ENCODE measurements at regions of chr6 and their contacts with region 1.

Region 1: DNA sequence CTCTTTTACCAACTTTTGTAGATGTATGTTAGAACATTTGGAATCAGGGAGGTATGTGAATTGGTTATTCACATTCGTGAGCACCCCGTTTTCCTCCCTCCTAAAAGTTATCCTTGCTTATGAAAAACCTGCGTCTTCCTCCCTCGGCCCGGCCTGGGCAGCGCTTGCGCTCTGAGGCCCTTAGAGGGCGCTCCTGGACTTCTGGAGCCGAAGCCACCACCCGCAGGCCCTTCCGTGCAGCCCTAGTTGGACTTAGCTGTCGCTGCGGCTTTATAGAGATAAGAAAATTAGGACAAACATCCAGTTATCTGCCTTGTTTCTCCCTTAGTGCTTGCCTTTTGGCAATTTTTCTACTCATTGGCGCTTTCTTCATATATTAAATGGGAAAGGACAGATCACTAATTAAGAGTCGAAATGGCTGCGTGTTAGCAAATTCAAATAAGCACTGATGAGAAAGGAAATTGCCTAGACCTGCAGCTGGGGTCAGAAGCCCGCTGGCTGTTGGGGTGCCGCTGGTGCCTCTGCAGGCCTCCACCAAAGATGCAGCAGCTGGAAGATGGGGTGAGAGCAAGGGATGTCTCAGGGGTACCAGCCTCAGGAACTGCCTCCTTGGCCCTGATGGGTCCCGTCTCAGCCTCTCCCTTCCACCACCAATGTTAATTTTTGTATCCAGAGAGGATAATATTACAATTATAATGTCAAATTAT is 5.2 kb downstream of the FNDC1 start:
- DNase-seq: peak; percentile 74
- H3K4me3 Mint-ChIP-seq: no peak overlapping the region
- H3K27ac Mint-ChIP-seq: no peak overlapping the region
- H3K4me1 Mint-ChIP-seq: peaks cover 14% of the 10 kb centered on the region
- H3K27me3 Mint-ChIP-seq: peaks cover 67% of the 10 kb centered on the region

Region 2: GRCh38 chr6:159184559-159184958 is 10.1 kb after region 1 on chr6:
- CTCF ChIA-PET with region 1: interaction called, 27 read pairs
- POLR2A ChIA-PET with region 1: no interaction called
- DNase-seq: no peak
- H3K4me3 Mint-ChIP-seq: no peak overlapping the region
- H3K27ac Mint-ChIP-seq: no peak overlapping the region
- H3K4me1 Mint-ChIP-seq: peaks cover 18% of the 10 kb centered on the region
- H3K27me3 Mint-ChIP-seq: peaks cover 15% of the 10 kb centered on the region

Region 3: DNA sequence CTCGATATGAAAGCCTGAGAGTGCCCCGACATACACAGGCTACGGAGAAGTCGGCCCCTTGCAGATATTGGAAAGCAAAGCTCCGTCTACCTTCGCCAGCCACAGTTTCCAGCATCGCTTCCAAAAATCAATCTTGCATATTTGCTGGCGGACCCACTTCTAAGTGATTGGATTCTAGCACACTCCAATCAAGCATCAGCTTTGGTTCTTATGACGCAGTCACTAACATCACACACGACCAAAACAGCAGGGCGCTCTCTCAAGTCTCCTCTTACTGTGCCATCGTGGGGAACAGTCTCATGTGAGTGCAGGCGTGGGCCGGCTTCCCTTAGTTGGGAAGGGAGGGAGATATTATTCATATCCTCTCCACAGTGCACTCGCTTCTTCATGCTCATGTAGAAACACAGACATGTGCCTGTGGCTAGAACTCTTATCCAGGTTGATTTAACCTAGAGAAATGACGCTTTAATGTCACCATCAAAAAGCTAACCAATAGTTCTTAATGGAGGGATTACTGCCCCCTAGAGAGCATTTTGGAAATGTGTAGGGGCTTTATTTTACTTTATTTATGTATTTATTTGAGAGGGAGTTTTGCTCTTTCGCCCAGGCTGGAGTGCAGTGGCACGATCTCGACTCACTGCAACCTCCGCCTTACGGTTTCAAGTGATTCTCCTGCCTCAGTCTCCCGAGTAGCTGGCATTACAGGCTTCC is 288.9 kb after region 1 on chr6:
- CTCF ChIA-PET with region 1: interaction called, 10 read pairs
- POLR2A ChIA-PET with region 1: no interaction called
- DNase-seq: no peak
- H3K4me3 Mint-ChIP-seq: no peak overlapping the region
- H3K27ac Mint-ChIP-seq: no peak overlapping the region
- H3K4me1 Mint-ChIP-seq: no peaks in the 10 kb centered on the region
- H3K27me3 Mint-ChIP-seq: peaks cover 10% of the 10 kb centered on the region

Region 4: DNA sequence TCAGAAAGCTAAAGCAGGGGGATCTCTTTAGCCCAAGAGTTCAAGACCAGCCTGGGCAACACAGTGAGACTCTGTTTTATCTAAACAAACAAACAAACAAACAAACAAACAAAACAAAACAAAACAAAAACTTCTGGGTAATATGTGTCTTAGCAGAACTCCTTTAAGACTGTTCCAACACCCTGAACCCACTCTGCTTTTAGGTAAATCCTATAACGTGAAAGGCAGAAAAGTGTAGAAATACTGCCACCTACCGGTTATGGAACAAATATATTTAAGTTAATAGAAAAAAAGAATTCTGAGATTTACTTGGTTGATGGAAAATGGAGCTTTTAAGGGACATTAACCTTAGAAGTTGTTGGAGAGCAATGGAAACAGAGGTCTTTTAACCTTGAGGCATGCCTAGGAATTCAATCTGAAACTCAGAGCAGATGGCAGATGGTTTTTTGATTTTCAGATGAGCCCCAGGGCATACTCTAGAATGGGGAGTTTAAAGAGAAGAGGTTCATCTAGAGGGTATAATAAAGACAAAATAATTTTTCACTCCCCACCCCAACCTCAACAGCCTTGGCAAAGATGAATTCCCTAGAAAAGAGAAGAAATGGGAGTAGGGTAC is 480.2 kb after region 1 on chr6:
- CTCF ChIA-PET with region 1: interaction called, 49 read pairs
- POLR2A ChIA-PET with region 1: no interaction called
- DNase-seq: no peak
- H3K4me3 Mint-ChIP-seq: no peak overlapping the region
- H3K27ac Mint-ChIP-seq: no peak overlapping the region
- H3K4me1 Mint-ChIP-seq: no peaks in the 10 kb centered on the region
- H3K27me3 Mint-ChIP-seq: no peaks in the 10 kb centered on the region

Measured in activated CD4-positive, alpha-beta memory T cell treated with anti-CD3 and anti-CD28 coated beads, Interleukin-2, amount 10 ng/mL, durations not matched to agents 7 days and 5 days (primary cell).